ENCODE measurements at regions of chr1 and their contacts with region 1.

Region 1: DNA sequence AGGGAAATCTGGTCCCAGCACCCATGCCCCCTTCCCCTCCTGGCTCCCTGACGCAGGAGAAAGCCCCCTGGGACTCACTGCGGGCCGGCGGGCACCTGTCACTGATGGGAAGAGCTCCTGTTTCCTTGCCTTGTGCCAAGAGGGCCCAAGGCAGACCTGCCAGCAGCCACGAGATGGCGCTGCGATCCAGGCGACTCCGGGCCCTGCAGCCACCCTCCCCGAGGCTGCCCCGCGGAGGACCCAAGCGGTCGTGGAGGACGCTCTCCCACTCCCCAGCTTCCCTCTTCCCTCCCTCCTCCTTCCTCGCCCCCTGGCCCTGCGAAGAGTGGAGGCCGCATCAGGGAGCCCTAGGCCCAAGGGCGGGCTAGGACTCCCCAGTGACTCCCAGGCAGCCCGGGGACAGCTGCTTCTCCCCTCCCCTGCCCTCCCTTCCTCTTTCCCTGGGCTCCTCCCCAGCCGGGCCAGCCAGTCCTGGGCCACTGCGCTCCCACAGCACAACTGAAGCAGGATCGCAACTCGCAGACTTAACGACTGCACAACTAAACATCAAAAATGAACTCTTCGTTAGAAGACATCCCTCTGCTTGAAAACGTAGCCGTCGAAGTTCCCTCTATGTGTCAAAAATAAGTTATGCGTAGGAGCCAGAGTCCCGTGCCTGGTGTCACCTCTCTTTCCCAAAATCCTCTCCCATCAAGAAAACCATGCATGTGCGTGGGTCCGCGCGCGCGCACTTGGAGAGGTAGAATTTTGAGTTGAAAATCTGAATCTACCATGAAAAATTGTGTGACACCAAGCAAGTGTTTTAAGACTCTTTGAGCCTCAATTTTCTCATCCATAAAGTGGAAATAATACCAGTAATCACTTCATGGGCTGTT is 34.2 kb downstream of the BATF3 start:
- DNase-seq: no peak
- H3K4me3 ChIP-seq: peak overlapping the region; percentile 75
- H3K27me3 ChIP-seq: no peaks in the 10 kb centered on the region
- CTCF ChIP-seq: peak; percentile 94

Region 2: GRCh38 chr1:212749821-212750535 is 84.5 kb after region 1 on chr1:
- CTCF ChIA-PET with region 1: interaction called, 12 read pairs
- POLR2A ChIA-PET with region 1: no interaction called
- DNase-seq: no peak
- H3K4me3 ChIP-seq: no peak overlapping the region
- H3K27me3 ChIP-seq: no peaks in the 10 kb centered on the region
- CTCF ChIP-seq: peak; percentile 79

Region 3: GRCh38 chr1:212775241-212775640 is 109.8 kb after region 1 on chr1:
- CTCF ChIA-PET with region 1: interaction called, 35 read pairs
- POLR2A ChIA-PET with region 1: no interaction called
- DNase-seq: no peak
- H3K4me3 ChIP-seq: no peak overlapping the region
- H3K27me3 ChIP-seq: no peaks in the 10 kb centered on the region
- CTCF ChIP-seq: no peak

Region 4: DNA sequence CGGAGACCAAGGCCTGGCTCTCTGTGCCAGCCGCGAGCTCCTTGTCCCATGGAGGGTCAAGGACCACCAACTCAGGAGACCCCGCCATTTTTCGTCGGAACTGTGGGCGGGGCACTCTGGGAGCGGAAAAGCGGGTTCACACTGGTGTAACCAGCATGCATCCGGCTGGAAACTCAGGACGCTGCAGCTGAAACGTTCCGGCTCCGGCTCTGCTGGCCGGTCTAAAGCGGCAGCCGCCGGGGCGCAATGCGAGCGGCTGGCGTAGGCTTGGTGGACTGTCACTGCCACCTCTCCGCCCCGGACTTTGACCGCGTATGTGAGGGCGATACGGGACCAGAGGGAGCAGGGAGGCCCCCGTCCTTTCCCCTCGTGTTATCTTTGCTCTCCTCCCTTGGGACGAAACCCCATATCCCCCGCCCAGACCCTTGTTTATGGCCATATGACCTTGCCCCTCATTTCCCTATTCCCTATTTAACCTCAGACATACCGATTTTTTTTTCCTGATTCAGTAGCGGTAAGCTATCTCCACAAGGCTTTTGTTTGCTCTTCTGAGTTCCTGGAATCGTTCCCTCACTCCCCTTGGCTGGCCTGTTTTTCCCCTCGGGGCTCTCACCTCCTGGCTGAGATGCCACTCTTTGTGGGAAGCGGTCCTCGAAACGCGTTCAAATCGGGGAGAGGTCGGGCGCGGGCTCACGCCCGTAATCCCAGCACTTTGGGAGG is 126.4 kb after region 1 on chr1 and contains the starts of genes NSL1 and TATDN3:
- CTCF ChIA-PET with region 1: interaction called, 29 read pairs
- POLR2A ChIA-PET with region 1: no interaction called
- DNase-seq: peak; percentile 48
- H3K4me3 ChIP-seq: peak within 1 kb of the TSS; percentile 98
- H3K27me3 ChIP-seq: no peaks in the 10 kb centered on the region
- CTCF ChIP-seq: no peak
- polyA plus RNA-seq, gene NSL1: 16.4 and 22.7 TPM in 2 replicates
- polyA plus RNA-seq, gene TATDN3: 4.6 and 9.5 TPM in 2 replicates

Measured in BJ (cell line).